Activated naive CD4-positive, alpha-beta T cell treated with anti-CD3 and anti-CD28 coated beads for 36 hours (primary cell): ENCODE measurements at regions of chr1 and their contacts with region 1.

Region 1: GRCh38 chr1:78040484-78041089 is 5.2 kb upstream of the GIPC2 start:
- DNase-seq: no peak
- H3K4me3 Mint-ChIP-seq: peak overlapping the region; percentile 57
- H3K27ac Mint-ChIP-seq: peak overlapping the region; percentile 32
- H3K4me1 Mint-ChIP-seq: peaks cover 27% of the 10 kb centered on the region
- H3K27me3 Mint-ChIP-seq: peaks cover 15% of the 10 kb centered on the region

Region 2: GRCh38 chr1:78070758-78071157 is 30.2 kb after region 1 on chr1:
- CTCF ChIA-PET with region 1: no interaction called
- intact Hi-C with region 1: loop called (anchors 2 kb)
- DNase-seq: no peak
- H3K4me3 Mint-ChIP-seq: no peak overlapping the region
- H3K27ac Mint-ChIP-seq: no peak overlapping the region
- H3K4me1 Mint-ChIP-seq: no peaks in the 10 kb centered on the region
- H3K27me3 Mint-ChIP-seq: peaks cover 9% of the 10 kb centered on the region

Region 3: DNA sequence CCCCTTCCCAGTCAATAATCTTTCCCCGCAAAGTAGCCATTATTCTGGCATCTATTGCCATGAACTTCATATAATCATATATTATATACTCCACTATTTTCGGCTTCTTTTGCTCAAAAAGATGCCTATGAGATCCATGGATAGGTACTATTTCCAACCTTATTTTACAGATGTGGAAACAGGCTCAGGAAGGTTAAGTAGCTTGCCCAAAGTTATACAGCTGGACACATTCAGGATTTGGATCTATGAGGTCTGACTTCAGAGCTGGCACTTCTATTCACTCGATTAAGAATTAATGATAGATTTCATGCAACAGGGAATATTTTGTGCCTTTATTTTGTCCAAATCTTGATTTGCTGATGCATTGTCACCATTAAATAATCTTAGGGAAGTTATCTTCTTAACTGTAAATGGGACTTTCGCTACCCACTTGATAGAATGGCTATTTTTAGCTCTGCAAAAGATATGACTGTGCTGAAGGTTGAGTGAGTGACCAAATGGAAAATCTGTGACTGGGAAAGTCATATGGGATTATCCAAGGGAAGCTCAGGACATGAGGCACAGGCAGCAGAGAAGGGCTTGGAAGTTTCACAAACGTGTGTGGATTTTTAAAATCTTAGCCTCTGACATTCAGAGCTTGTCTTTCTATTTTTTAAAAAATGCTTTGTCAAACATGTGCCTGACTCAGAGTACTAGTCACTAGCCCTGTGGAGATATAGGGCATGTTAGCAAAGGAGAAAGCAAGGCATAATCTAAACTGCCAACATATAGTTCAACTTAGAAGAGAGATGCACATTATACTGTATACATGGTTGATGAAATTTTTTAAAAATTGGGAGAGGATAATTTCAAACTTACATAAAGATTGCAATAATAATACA is 41.6 kb after region 1 on chr1:
- CTCF ChIA-PET with region 1: no interaction called
- intact Hi-C with region 1: loop called (anchors 2 kb)
- DNase-seq: no peak
- H3K4me3 Mint-ChIP-seq: no peak overlapping the region
- H3K27ac Mint-ChIP-seq: no peak overlapping the region
- H3K4me1 Mint-ChIP-seq: peaks cover 16% of the 10 kb centered on the region
- H3K27me3 Mint-ChIP-seq: peaks cover 4% of the 10 kb centered on the region

Region 4: GRCh38 chr1:79554688-79555087 is 1514.1 kb after region 1 on chr1:
- CTCF ChIA-PET with region 1: no interaction called
- intact Hi-C with region 1: no loop called
- DNase-seq: no peak
- H3K4me3 Mint-ChIP-seq: no peak overlapping the region
- H3K27ac Mint-ChIP-seq: no peak overlapping the region
- H3K4me1 Mint-ChIP-seq: no peaks in the 10 kb centered on the region
- H3K27me3 Mint-ChIP-seq: no peaks in the 10 kb centered on the region